ENCODE measurements at regions of chr1 and their contacts with region 1.

Region 1: DNA sequence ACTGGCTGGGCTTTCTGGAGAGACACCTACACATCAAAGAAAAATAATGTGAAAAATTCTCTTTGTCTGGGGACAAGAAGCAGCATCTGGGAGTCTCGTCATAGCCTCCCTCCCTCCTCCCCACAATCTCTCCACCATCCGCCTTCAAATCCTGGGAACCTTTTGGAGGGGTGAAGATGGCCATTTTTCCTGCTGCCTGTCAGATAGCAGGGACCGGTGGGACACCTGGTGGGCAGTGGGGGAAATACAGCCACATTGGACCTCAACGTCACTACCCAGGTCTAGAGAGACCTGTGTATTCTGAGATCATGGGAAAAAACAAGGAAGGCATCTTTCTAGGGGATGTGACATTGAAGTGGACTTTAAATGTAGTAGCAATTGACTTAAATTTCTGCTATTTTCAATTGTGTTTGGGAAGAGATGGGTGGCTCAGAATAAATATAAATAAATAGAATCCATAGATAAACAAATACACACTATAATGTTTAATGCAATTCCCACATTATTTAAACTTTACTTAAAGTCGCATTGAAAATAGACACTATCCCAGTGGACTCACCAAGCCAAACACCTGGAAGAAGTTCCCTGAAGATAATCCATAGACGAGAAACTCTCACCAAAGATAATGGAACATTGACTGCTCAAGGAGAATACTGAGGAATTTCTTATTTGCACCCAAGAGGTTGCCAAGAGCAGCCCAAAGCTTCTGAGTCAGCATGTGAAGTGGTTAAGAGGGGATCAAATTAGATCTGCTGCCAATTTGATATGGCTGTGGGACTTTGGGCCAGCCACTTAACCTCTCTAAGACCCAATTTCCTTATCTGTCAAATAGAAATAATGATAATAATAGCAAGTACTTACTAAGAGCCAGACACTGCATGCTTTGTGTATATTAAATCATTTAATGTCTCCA is 147.6 kb upstream of the CAMK1G start:
- DNase-seq: peak; percentile 80
- H3K4me3 ChIP-seq: no peak overlapping the region
- H3K27ac ChIP-seq: peak overlapping the region; percentile 99
- H3K4me1 ChIP-seq: peaks cover 51% of the 10 kb centered on the region
- H3K27me3 ChIP-seq: no peaks in the 10 kb centered on the region
- CTCF ChIP-seq: peak; percentile 92 to 97

Region 2: GRCh38 chr1:208652296-208653160 is 783.4 kb before region 1 on chr1:
- CTCF ChIA-PET with region 1: no interaction called
- dilution Hi-C with region 1: no loop called
- in situ Hi-C with region 1: loop called in 1 of 2 experiments (anchors 10 kb)
- intact Hi-C with region 1: loop called (anchors 1 kb)
- DNase-seq: peak; percentile 54
- H3K4me3 ChIP-seq: no peak overlapping the region
- H3K27ac ChIP-seq: no peak overlapping the region
- H3K4me1 ChIP-seq: no peaks in the 10 kb centered on the region
- H3K27me3 ChIP-seq: peaks cover 6% of the 10 kb centered on the region
- CTCF ChIP-seq: peak; percentile 83 to 87

Region 3: GRCh38 chr1:209207701-209208286 is 228.1 kb before region 1 on chr1:
- CTCF ChIA-PET with region 1: interaction called, 6 read pairs
- dilution Hi-C with region 1: no loop called
- in situ Hi-C with region 1: loop called (anchors 10 kb)
- intact Hi-C with region 1: loop called (anchors 1 kb)
- DNase-seq: peak; percentile 44
- H3K4me3 ChIP-seq: peak overlapping the region; percentile 28 to 46 (median 36)
- H3K27ac ChIP-seq: no peak overlapping the region
- H3K4me1 ChIP-seq: peaks cover 12% of the 10 kb centered on the region
- H3K27me3 ChIP-seq: no peaks in the 10 kb centered on the region
- CTCF ChIP-seq: peak; percentile 59 to 92

Region 4: GRCh38 chr1:209383907-209384709 is 51.8 kb before region 1 on chr1:
- CTCF ChIA-PET with region 1: interaction called, 6 read pairs
- dilution Hi-C with region 1: no loop called
- in situ Hi-C with region 1: loop called in 1 of 2 experiments (anchors 5 kb)
- intact Hi-C with region 1: loop called (anchors 1 kb)
- DNase-seq: peak; percentile 84
- H3K4me3 ChIP-seq: peak overlapping the region; percentile 5 to 27 (median 11)
- H3K27ac ChIP-seq: peak overlapping the region; percentile 98
- H3K4me1 ChIP-seq: peaks cover 77% of the 10 kb centered on the region
- H3K27me3 ChIP-seq: no peaks in the 10 kb centered on the region
- CTCF ChIP-seq: no peak

Region 5: GRCh38 chr1:209411491-209411929 is 24.4 kb before region 1 on chr1:
- CTCF ChIA-PET with region 1: no interaction called
- dilution Hi-C with region 1: no loop called
- in situ Hi-C with region 1: no loop called
- intact Hi-C with region 1: loop called (anchors 1 kb)
- DNase-seq: peak; percentile 97
- H3K4me3 ChIP-seq: peak overlapping the region in 1 of 3 experiments; percentile 12
- H3K27ac ChIP-seq: peak overlapping the region; percentile 100
- H3K4me1 ChIP-seq: peaks cover 78% of the 10 kb centered on the region
- H3K27me3 ChIP-seq: no peaks in the 10 kb centered on the region
- CTCF ChIP-seq: no peak

Region 6: GRCh38 chr1:209565759-209566678 is 130.1 kb after region 1 on chr1:
- CTCF ChIA-PET with region 1: no interaction called
- dilution Hi-C with region 1: no loop called
- in situ Hi-C with region 1: no loop called
- intact Hi-C with region 1: loop called (anchors 1 kb)
- DNase-seq: peak; percentile 77
- H3K4me3 ChIP-seq: no peak overlapping the region
- H3K27ac ChIP-seq: peak overlapping the region; percentile 18
- H3K4me1 ChIP-seq: peaks cover 38% of the 10 kb centered on the region
- H3K27me3 ChIP-seq: no peaks in the 10 kb centered on the region
- CTCF ChIP-seq: peak; percentile 78 to 87

Region 7: GRCh38 chr1:210250998-210251679 is 815.2 kb after region 1 on chr1:
- CTCF ChIA-PET with region 1: no interaction called
- dilution Hi-C with region 1: no loop called
- in situ Hi-C with region 1: no loop called
- intact Hi-C with region 1: no loop called
- DNase-seq: peak; percentile 70
- H3K4me3 ChIP-seq: peak overlapping the region; percentile 30 to 58 (median 44)
- H3K27ac ChIP-seq: no peak overlapping the region
- H3K4me1 ChIP-seq: peaks cover 16% of the 10 kb centered on the region
- H3K27me3 ChIP-seq: no peaks in the 10 kb centered on the region
- CTCF ChIP-seq: no peak